H1 (cell line): ENCODE measurements at regions of chr1 and their contacts with region 1.

Region 1: DNA sequence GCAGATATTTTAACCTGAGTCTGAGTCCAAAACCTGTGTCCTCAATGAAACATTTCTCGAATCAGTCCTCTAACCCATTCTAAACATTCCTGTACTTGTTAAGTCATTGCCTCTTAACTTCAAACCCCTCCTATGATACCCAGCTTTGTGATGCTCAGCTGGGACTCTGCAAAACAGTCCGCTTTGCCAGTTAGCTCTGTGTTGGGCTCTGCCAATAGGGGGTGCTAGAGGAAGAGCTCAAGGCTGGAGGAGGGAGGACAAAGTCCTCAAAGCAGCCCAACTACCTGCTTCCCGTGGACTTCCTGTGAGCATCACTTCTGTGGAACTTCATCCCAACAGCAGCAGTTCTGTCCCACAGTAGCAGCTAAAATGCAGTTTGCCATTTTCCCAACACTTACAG is 38.1 kb upstream of the SYT14 start:
- DNase-seq: peak; percentile 34 to 81
- H3K4me3 ChIP-seq: no peak overlapping the region
- H3K27ac ChIP-seq: no peak overlapping the region
- H3K4me1 ChIP-seq: no peaks in the 10 kb centered on the region
- H3K27me3 ChIP-seq: no peaks in the 10 kb centered on the region
- CTCF ChIP-seq: peak; percentile 76 to 99 (median 79)
- EP300 ChIP-seq: no peak
- POLR2A ChIP-seq: no peak
- RAD21 ChIP-seq: peak; percentile 70 to 83

Region 2: DNA sequence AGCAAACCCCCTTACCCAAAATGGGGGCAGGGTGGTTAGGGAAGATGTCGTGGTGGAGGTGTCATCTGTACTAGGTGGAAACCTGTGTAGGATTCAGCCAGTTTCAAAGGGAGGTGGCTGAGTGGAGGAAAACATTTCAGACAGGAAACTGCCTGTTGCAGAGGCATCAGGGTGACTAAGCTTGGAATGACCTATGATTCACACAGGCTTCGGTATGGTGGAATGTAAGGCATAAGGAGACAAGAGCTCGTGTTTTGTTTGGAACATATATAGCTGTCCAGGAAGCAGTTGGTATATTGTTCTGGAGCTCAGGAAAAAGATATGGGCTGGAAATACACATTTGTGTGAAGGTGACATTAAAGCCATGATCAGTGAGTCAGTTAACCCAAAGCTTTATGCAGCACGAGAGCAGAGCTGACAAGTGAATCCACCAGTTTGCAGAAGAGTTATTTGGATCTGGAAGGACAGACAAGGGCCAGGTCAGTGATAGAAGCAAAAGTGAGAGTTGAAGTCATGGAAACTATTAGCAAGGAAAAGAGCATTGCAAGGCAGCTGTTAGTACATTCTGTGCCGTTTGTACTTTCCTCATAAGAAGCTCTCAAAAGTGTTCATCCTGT is 60.0 kb before region 1 on chr1:
- CTCF ChIA-PET with region 1: no interaction called
- POLR2A ChIA-PET with region 1: no interaction called
- DNase-seq: no peak
- H3K4me3 ChIP-seq: no peak overlapping the region
- H3K27ac ChIP-seq: no peak overlapping the region
- H3K4me1 ChIP-seq: no peaks in the 10 kb centered on the region
- H3K27me3 ChIP-seq: no peaks in the 10 kb centered on the region
- CTCF ChIP-seq: no peak
- EP300 ChIP-seq: no peak
- POLR2A ChIP-seq: no peak
- RAD21 ChIP-seq: no peak

Region 3: DNA sequence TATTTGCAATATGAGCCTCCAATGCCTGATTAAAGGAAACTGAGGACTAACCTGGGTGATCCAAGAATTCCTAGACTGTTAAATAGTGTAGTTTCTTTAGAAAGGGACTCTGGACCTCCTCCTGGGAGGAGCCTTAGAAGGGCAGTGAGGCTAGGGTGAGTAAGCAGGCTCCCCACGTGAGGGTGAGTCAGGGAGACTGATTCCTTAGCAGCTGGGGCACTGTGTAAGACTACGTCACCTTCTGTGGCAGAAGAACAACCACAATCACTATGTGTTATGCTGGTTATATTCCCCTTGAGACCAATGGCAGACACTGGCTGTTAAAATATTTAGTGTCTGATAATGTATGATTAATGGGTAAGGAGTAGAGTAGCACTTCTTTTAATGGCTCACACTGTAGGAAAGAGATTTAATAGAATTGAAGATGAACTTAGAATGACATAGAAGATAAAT is 15.3 kb before region 1 on chr1:
- CTCF ChIA-PET with region 1: interaction called, 18 read pairs
- POLR2A ChIA-PET with region 1: no interaction called
- DNase-seq: no peak
- H3K4me3 ChIP-seq: no peak overlapping the region
- H3K27ac ChIP-seq: no peak overlapping the region
- H3K4me1 ChIP-seq: no peaks in the 10 kb centered on the region; a peak in 1 of 7 replicates
- H3K27me3 ChIP-seq: no peaks in the 10 kb centered on the region
- CTCF ChIP-seq: no peak
- EP300 ChIP-seq: no peak
- POLR2A ChIP-seq: no peak
- RAD21 ChIP-seq: no peak

Region 4: DNA sequence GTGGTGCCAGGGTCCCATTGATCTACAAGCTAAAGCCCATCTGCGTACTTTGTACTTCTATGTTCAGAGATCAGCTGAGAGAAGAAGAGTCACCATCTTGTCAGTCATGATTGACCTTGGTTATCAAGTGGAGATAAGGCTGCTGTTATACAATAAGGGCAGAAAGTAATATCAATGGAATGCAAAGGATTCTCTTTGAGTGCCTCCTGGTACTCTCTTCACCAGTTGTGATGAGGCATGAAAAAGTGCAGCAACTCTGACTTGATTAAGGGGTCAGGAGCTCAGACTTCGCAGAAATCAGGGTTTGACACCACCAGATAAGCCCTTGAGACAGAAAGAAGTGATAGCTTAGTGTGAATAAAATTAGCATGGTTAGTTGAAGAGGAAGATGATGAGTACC is 12.4 kb after region 1 on chr1:
- CTCF ChIA-PET with region 1: interaction called, 12 read pairs
- POLR2A ChIA-PET with region 1: interaction called, 5 read pairs
- DNase-seq: no peak
- H3K4me3 ChIP-seq: no peak overlapping the region
- H3K27ac ChIP-seq: no peak overlapping the region
- H3K4me1 ChIP-seq: no peaks in the 10 kb centered on the region
- H3K27me3 ChIP-seq: no peaks in the 10 kb centered on the region
- CTCF ChIP-seq: no peak
- EP300 ChIP-seq: no peak
- POLR2A ChIP-seq: no peak
- RAD21 ChIP-seq: no peak

Region 5: GRCh38 chr1:209945377-209945776 is 45.4 kb after region 1 on chr1:
- CTCF ChIA-PET with region 1: no interaction called
- POLR2A ChIA-PET with region 1: no interaction called
- DNase-seq: no peak
- H3K4me3 ChIP-seq: no peak overlapping the region
- H3K27ac ChIP-seq: no peak overlapping the region
- H3K4me1 ChIP-seq: peaks cover 0 to 3% (median 0%) of the 10 kb centered on the region in 4 experiments; a peak in 1 of 7 replicates
- H3K27me3 ChIP-seq: no peaks in the 10 kb centered on the region
- CTCF ChIP-seq: no peak
- EP300 ChIP-seq: no peak
- POLR2A ChIP-seq: no peak
- RAD21 ChIP-seq: no peak

Region 6: DNA sequence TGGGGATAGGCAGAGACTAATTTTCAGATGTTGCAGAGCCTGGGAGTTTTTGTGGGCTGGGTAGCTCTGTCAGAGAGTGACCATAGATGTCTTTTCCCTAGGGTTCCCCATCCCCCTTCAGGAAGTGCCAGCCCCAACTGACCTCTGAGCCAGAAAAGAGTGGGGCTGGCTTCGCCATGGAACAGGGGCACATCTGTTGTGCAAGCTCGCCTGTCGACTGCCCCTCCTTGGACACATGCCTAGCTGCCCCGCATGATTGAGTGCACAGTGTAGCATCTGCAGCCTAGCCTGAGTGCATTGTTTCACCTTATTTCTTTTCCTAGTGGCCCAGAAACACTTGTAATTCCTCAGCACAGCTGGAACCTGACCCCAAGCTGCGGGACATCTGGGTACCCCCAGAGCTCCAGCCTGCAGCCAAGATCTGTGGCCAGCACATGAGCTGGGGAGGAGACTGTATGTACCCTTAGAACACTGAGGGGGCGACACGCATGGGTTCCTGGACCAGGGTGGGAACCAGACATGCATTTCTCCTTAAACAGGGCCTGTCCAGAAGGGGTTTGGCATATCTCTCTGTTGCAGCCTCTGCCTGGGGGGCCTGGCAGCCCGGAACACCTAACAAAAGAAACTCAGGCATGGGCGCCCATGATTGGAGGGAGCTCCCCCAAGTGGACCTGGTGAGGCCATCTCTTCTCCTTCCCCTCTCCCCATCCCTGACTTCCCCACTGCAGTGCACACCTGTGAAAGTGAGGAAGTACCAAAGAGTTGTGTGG is 93.3 kb after region 1 on chr1:
- CTCF ChIA-PET with region 1: interaction called, 13 read pairs
- POLR2A ChIA-PET with region 1: no interaction called
- DNase-seq: no peak
- H3K4me3 ChIP-seq: no peak overlapping the region
- H3K27ac ChIP-seq: no peak overlapping the region
- H3K4me1 ChIP-seq: no peaks in the 10 kb centered on the region; a peak in 1 of 7 replicates
- H3K27me3 ChIP-seq: no peaks in the 10 kb centered on the region
- CTCF ChIP-seq: no peak
- EP300 ChIP-seq: no peak
- POLR2A ChIP-seq: no peak
- RAD21 ChIP-seq: no peak

Region 7: DNA sequence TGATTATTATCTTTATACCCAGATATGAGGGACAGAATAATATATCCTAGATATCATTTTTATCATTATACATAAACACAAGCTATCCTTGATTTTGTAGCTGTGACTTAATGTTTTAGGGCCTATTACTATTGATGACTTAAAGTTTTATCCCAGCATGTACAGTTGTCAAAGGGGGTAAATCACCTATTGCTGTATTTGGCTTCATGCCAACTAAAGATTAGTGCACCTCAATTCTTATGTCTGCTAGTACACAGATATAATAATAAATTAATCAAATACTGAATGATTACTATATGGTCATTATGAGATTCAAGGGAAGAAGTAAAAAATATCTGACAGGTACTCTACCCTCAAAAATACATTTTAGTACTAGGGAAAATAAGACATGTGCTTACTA is 122.1 kb after region 1 on chr1:
- CTCF ChIA-PET with region 1: interaction called, 14 read pairs
- POLR2A ChIA-PET with region 1: no interaction called
- DNase-seq: no peak
- H3K4me3 ChIP-seq: no peak overlapping the region
- H3K27ac ChIP-seq: no peak overlapping the region
- H3K4me1 ChIP-seq: no peaks in the 10 kb centered on the region
- H3K27me3 ChIP-seq: no peaks in the 10 kb centered on the region
- CTCF ChIP-seq: no peak
- EP300 ChIP-seq: no peak
- POLR2A ChIP-seq: no peak
- RAD21 ChIP-seq: no peak

Region 8: GRCh38 chr1:210043058-210043457 is 143.1 kb after region 1 on chr1:
- CTCF ChIA-PET with region 1: no interaction called
- POLR2A ChIA-PET with region 1: no interaction called
- DNase-seq: no peak
- H3K4me3 ChIP-seq: no peak overlapping the region
- H3K27ac ChIP-seq: no peak overlapping the region
- H3K4me1 ChIP-seq: no peaks in the 10 kb centered on the region
- H3K27me3 ChIP-seq: no peaks in the 10 kb centered on the region
- CTCF ChIP-seq: no peak
- EP300 ChIP-seq: no peak
- POLR2A ChIP-seq: no peak
- RAD21 ChIP-seq: no peak